Adrenal gland (tissue), 19 donors: ENCODE measurements at regions of chr10 and their contacts with region 1.

Region 1: DNA sequence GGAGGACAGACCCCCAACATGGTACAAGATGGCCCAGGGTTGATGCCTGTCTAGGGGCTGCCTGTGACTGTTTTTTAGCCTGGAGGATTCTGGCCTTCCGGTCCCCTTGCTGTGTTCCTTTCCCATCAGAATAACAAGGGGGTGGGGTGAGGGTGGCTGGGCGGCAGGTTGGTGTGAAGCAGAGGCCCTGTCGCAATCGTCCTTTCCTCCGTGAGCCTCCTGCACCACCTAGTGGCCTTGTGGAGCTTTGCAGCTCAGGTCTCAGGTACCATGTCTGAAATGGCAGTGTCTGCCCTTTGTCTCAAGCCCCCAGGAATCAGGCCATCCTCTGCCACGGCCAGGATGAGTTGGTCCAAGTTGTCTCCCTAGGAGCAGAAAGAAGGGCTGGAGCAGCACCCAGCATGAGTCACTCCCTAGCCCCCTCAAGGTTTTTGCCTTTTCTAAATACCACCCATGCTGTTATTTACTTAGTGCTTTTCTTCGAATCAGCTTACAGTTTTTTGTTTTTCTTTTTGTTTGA is 24.2 kb downstream of the TACR2 start:
- DNase-seq: peak; percentile 77 to 94 (median 87)
- H3K4me3 ChIP-seq: no peak overlapping the region
- H3K27ac ChIP-seq: peak overlapping the region in 1 of 5 donors; percentile 30
- H3K4me1 ChIP-seq: no peaks in the 10 kb centered on the region
- H3K27me3 ChIP-seq: no peaks in the 10 kb centered on the region
- CTCF ChIP-seq: peak; percentile 87 to 99 (median 98)
- POLR2A ChIP-seq: no peak

Region 2: DNA sequence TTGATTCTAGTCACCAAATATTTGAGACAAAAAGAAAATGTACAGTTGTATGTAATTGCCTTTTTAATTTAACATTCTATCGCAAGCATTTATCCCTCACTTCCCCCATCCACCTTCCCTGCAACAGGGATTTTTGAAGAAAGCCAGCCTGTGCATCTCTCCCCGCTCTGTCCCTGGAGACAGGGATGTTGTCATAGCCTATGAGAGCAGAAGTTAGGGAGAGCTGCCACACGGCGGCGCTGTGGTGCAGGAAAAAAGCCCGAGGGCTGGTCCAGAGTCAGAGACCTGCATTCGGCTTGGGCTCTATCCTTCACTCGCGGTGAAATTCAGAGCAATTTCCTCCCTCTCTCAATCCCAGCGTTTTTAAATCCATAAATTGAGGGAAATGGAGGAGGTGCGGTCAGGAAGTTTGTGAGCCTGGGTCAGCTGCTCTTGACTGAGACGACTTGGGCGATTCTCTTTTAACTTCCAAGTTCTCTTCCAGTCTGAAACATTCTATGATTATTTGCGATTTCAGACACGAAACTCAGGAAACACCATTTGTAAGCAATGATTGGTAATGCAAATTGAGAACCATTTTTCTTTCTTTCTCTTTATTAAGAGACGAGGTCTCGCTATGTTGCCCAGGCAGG is 154.9 kb before region 1 on chr10:
- intact Hi-C with region 1: loop called (anchors 2 to 5 kb)
- DNase-seq: peak; percentile 77 to 96 (median 88)
- H3K4me3 ChIP-seq: no peak overlapping the region
- H3K27ac ChIP-seq: no peak overlapping the region
- H3K4me1 ChIP-seq: peaks cover 0 to 3% of the 10 kb centered on the region in 2 donors
- H3K27me3 ChIP-seq: no peaks in the 10 kb centered on the region
- CTCF ChIP-seq: peak; percentile 87 to 99 (median 96)
- POLR2A ChIP-seq: no peak